Transverse colon (tissue), 4 donors: ENCODE measurements at regions of chr1 and their contacts with region 1.

Region 1: GRCh38 chr1:38114241-38115026 is 67.8 kb upstream of the POU3F1 start:
- DNase-seq: no peak
- H3K4me3 ChIP-seq: no peak overlapping the region
- H3K27ac ChIP-seq: no peak overlapping the region
- H3K4me1 ChIP-seq: no peaks in the 10 kb centered on the region
- H3K27me3 ChIP-seq: no peaks in the 10 kb centered on the region
- CTCF ChIP-seq: no peak
- EP300 ChIP-seq: no peak
- POLR2A ChIP-seq: no peak

Region 2: GRCh38 chr1:37006132-37006868 is 1108.1 kb before region 1 on chr1:
- in situ Hi-C with region 1: no loop called
- intact Hi-C with region 1: loop called (anchors 5 kb)
- DNase-seq: no peak
- H3K4me3 ChIP-seq: no peak overlapping the region
- H3K27ac ChIP-seq: no peak overlapping the region
- H3K4me1 ChIP-seq: no peaks in the 10 kb centered on the region
- H3K27me3 ChIP-seq: no peaks in the 10 kb centered on the region
- CTCF ChIP-seq: no peak
- EP300 ChIP-seq: no peak
- POLR2A ChIP-seq: no peak

Region 3: GRCh38 chr1:38052750-38053410 is 61.6 kb before region 1 on chr1:
- in situ Hi-C with region 1: no loop called
- intact Hi-C with region 1: no loop called
- DNase-seq: no peak
- H3K4me3 ChIP-seq: no peak overlapping the region
- H3K27ac ChIP-seq: no peak overlapping the region
- H3K4me1 ChIP-seq: peaks cover 0 to 2% (median under 1%) of the 10 kb centered on the region in 4 donors
- H3K27me3 ChIP-seq: peaks cover 55% of the 10 kb centered on the region
- CTCF ChIP-seq: no peak
- EP300 ChIP-seq: no peak
- POLR2A ChIP-seq: no peak